ENCODE measurements at regions of chr10 and their contacts with region 1.

Region 1: GRCh38 chr10:116465546-116465945 is 37.9 kb downstream of the PNLIPRP3 start:
- DNase-seq: peak; percentile 8
- ATAC-seq: peak; percentile 47
- H3K4me3 Mint-ChIP-seq: no peak overlapping the region
- H3K27ac Mint-ChIP-seq: no peak overlapping the region
- H3K4me1 Mint-ChIP-seq: no peaks in the 10 kb centered on the region
- H3K27me3 Mint-ChIP-seq: peaks cover 7% of the 10 kb centered on the region
- CTCF ChIP-seq: no peak

Region 2: GRCh38 chr10:116241642-116242410 is 223.7 kb before region 1 on chr10:
- CTCF ChIA-PET with region 1: no interaction called
- POLR2A ChIA-PET with region 1: no interaction called
- intact Hi-C with region 1: no loop called
- DNase-seq: no peak
- ATAC-seq: no peak
- H3K4me3 Mint-ChIP-seq: no peak overlapping the region
- H3K27ac Mint-ChIP-seq: no peak overlapping the region
- H3K4me1 Mint-ChIP-seq: no peaks in the 10 kb centered on the region
- H3K27me3 Mint-ChIP-seq: no peaks in the 10 kb centered on the region
- CTCF ChIP-seq: no peak

Region 3: DNA sequence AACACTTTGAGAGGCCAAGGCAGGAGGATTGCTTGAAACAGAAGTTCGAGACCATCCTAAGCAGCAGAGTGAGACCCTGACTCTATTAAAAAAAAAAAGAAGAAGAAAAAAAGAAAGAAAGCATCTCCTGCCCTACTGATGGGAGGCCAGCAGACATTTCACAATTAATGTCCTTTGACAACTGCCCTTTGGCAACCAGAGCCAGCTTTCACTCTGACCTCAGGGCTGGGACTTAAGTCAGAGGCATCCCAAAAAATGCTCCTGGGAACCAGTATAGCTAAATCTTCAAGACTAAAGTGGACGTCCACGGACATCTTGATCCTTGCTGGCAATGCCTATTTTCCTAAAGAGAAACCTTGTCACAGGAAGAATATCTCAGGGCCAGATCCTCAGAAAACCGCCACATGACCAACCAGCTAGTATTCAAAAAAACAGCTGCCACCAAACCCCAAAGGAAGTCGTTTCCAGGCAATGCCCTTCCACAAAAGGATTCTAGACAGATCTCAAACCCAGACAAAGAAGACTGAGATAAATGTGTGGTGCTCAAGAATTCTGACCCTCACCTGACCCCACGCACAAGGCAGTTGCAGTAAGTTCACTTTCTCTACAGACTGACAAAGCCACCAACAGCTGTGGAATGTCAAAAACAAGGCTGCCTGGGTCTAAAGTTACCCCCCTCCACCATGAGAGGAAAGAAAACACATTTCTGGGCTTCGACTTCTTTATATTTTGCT is 211.0 kb before region 1 on chr10:
- CTCF ChIA-PET with region 1: no interaction called
- POLR2A ChIA-PET with region 1: no interaction called
- intact Hi-C with region 1: no loop called
- DNase-seq: no peak
- ATAC-seq: no peak
- H3K4me3 Mint-ChIP-seq: no peak overlapping the region
- H3K27ac Mint-ChIP-seq: no peak overlapping the region
- H3K4me1 Mint-ChIP-seq: no peaks in the 10 kb centered on the region
- H3K27me3 Mint-ChIP-seq: no peaks in the 10 kb centered on the region
- CTCF ChIP-seq: no peak

Region 4: DNA sequence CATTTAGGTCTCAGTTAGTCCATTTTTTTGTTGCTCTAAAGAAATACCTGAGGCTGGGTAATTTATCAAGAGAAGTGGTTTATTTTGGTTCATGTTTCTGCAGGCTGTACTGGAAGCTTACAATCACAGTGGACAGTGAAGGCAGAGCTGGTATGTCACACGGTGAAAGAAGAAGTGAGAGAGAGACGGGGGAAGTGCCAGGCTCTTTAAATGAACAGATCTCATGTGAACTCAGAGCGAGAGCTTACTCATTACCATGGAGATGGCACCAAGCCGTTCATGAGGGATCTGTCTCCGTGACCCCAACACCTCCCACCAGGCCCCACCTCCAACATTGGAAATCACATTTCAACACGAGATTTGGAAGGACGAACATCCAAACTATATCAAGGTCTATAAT is 56.8 kb before region 1 on chr10:
- CTCF ChIA-PET with region 1: no interaction called
- POLR2A ChIA-PET with region 1: no interaction called
- intact Hi-C with region 1: loop called (anchors 10 kb)
- DNase-seq: no peak
- ATAC-seq: no peak
- H3K4me3 Mint-ChIP-seq: no peak overlapping the region
- H3K27ac Mint-ChIP-seq: no peak overlapping the region
- H3K4me1 Mint-ChIP-seq: no peaks in the 10 kb centered on the region
- H3K27me3 Mint-ChIP-seq: peaks cover 1% of the 10 kb centered on the region
- CTCF ChIP-seq: no peak

Measured in activated CD8-positive, alpha-beta T cell treated with anti-CD3 and anti-CD28 coated beads for 36 hours (primary cell).